ENCODE measurements at regions of chr3 and their contacts with region 1.

Region 1: GRCh38 chr3:25856902-25857518 is 67.1 kb downstream of the OXSM start:
- DNase-seq: no peak
- H3K4me3 Mint-ChIP-seq: no peak overlapping the region
- H3K27ac Mint-ChIP-seq: no peak overlapping the region
- H3K4me1 Mint-ChIP-seq: no peaks in the 10 kb centered on the region
- H3K27me3 Mint-ChIP-seq: peaks cover 3% of the 10 kb centered on the region

Region 2: GRCh38 chr3:25648107-25648535 is 208.9 kb before region 1 on chr3:
- CTCF ChIA-PET with region 1: interaction called, 71 read pairs
- DNase-seq: peak; percentile 88
- H3K4me3 Mint-ChIP-seq: no peak overlapping the region
- H3K27ac Mint-ChIP-seq: no peak overlapping the region
- H3K4me1 Mint-ChIP-seq: peaks cover 18% of the 10 kb centered on the region
- H3K27me3 Mint-ChIP-seq: no peaks in the 10 kb centered on the region

Region 3: GRCh38 chr3:25844891-25845290 is 12.1 kb before region 1 on chr3:
- CTCF ChIA-PET with region 1: interaction called, 12 read pairs
- DNase-seq: no peak
- H3K4me3 Mint-ChIP-seq: no peak overlapping the region
- H3K27ac Mint-ChIP-seq: no peak overlapping the region
- H3K4me1 Mint-ChIP-seq: no peaks in the 10 kb centered on the region
- H3K27me3 Mint-ChIP-seq: peaks cover 8% of the 10 kb centered on the region

Region 4: GRCh38 chr3:25992599-25992998 is 135.6 kb after region 1 on chr3:
- CTCF ChIA-PET with region 1: no interaction called
- DNase-seq: no peak
- H3K4me3 Mint-ChIP-seq: no peak overlapping the region
- H3K27ac Mint-ChIP-seq: no peak overlapping the region
- H3K4me1 Mint-ChIP-seq: no peaks in the 10 kb centered on the region
- H3K27me3 Mint-ChIP-seq: no peaks in the 10 kb centered on the region

Measured in activated naive CD4-positive, alpha-beta T cell treated with anti-CD3 and anti-CD28 coated beads, Interleukin-2, amount 10 ng/mL, durations not matched to agents 7 days and 5 days (primary cell).